CD8-positive, alpha-beta memory T cell (primary cell): ENCODE measurements at regions of chr17 and their contacts with region 1.

Region 1: GRCh38 chr17:36482611-36483504 is 3.6 kb upstream of the ZNHIT3 start:
- DNase-seq: peak; percentile 69 to 78 (median 71)
- H3K4me3 ChIP-seq: peak overlapping the region; percentile 58
- H3K4me3 Mint-ChIP-seq: peak overlapping the region; percentile 66 to 78 (median 72)
- H3K27ac ChIP-seq: no peak overlapping the region
- H3K27ac Mint-ChIP-seq: no peak overlapping the region
- H3K4me1 ChIP-seq: peaks cover 20% of the 10 kb centered on the region
- H3K4me1 Mint-ChIP-seq: peaks cover 26 to 33% (median 29%) of the 10 kb centered on the region in 3 donors
- H3K27me3 ChIP-seq: peaks cover 7% of the 10 kb centered on the region
- H3K27me3 Mint-ChIP-seq: peaks cover 13 to 26% of the 10 kb centered on the region in 2 donors

Region 2: GRCh38 chr17:36495076-36495578 is 12.3 kb after region 1 on chr17:
- CTCF ChIA-PET with region 1: interaction called, 11 read pairs
- POLR2A ChIA-PET with region 1: no interaction called
- DNase-seq: no peak
- H3K4me3 ChIP-seq: no peak overlapping the region
- H3K4me3 Mint-ChIP-seq: no peak overlapping the region
- H3K27ac ChIP-seq: no peak overlapping the region
- H3K27ac Mint-ChIP-seq: peak overlapping the region in 1 of 8 donors; percentile 65
- H3K4me1 ChIP-seq: peaks cover 6% of the 10 kb centered on the region
- H3K4me1 Mint-ChIP-seq: peaks cover 14 to 33% (median 25%) of the 10 kb centered on the region in 3 donors
- H3K27me3 ChIP-seq: no peaks in the 10 kb centered on the region
- H3K27me3 Mint-ChIP-seq: no peaks in the 10 kb centered on the region

Region 3: DNA sequence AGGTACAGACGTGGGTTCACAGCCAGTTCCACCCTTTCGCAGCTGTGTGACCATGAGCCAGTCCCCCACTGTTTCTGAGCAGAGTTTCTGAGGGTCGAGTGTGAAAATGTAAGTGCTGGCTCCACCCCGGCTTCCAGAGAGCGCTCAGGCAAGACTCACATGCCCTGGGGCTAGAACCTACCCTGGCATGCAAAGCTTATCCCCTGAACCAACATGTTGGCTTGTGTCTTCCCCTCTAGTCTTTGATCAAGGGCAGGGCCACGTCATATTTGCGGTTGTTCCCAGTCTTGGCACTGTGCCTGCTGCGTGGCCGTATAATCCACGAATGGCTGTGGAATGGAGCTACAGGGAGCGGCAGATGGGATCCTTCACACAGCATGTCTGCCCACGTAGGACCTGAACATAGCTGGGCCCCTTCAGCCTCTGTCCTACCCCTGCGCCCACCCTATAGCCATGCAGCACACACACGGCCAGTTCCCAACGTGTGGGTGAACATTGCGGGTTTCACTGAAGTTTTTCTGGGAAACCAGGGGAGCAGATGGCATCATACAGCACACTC is 203.3 kb after region 1 on chr17:
- CTCF ChIA-PET with region 1: no interaction called
- POLR2A ChIA-PET with region 1: no interaction called
- DNase-seq: no peak
- H3K4me3 ChIP-seq: no peak overlapping the region
- H3K4me3 Mint-ChIP-seq: no peak overlapping the region
- H3K27ac ChIP-seq: no peak overlapping the region
- H3K27ac Mint-ChIP-seq: no peak overlapping the region
- H3K4me1 ChIP-seq: no peaks in the 10 kb centered on the region
- H3K4me1 Mint-ChIP-seq: no peaks in the 10 kb centered on the region
- H3K27me3 ChIP-seq: no peaks in the 10 kb centered on the region
- H3K27me3 Mint-ChIP-seq: peaks cover 4 to 8% of the 10 kb centered on the region in 2 donors

Region 4: DNA sequence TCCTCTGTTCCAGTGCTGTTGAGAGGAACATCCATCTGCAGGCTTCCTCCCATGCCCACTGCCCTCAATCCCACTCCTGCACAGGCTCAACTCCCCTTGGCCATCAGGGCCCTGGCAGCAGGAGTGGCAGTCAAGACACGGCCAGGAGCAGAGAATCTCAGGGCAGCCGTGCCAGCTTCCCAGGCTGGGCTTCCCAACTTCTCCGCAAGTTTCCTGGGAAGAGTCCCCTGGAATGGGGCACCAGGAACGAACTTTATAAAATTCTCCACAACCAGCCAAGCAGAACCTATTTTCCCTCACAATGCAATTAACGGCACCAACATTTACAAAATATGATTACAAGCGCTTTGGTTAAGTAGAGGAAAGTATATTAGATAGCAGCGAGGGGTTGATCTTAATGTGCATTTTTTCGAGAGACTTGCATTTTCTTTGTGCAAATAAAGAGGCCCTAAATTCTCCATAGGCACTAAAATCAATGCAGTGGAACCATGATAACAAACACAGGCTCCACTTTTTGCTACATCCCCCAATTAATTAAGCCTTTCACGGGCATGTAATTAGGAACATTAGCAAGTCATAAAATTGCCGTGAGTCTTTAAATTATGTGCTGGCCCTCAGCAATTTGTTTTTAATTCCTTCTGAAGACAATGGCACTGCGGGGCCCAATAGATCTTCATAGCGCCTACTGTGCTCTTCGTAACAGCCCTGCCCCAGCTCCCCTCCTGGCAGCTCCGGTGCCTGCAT is 354.5 kb after region 1 on chr17:
- CTCF ChIA-PET with region 1: no interaction called
- POLR2A ChIA-PET with region 1: no interaction called
- DNase-seq: no peak
- H3K4me3 ChIP-seq: no peak overlapping the region
- H3K4me3 Mint-ChIP-seq: no peak overlapping the region
- H3K27ac ChIP-seq: no peak overlapping the region
- H3K27ac Mint-ChIP-seq: peak overlapping the region in 1 of 8 donors; percentile 33
- H3K4me1 ChIP-seq: no peaks in the 10 kb centered on the region
- H3K4me1 Mint-ChIP-seq: no peaks in the 10 kb centered on the region
- H3K27me3 ChIP-seq: no peaks in the 10 kb centered on the region
- H3K27me3 Mint-ChIP-seq: peaks cover 1 to 19% of the 10 kb centered on the region in 2 donors